AG04450 (cell line): ENCODE measurements at regions of chr17 and their contacts with region 1.

Region 1: DNA sequence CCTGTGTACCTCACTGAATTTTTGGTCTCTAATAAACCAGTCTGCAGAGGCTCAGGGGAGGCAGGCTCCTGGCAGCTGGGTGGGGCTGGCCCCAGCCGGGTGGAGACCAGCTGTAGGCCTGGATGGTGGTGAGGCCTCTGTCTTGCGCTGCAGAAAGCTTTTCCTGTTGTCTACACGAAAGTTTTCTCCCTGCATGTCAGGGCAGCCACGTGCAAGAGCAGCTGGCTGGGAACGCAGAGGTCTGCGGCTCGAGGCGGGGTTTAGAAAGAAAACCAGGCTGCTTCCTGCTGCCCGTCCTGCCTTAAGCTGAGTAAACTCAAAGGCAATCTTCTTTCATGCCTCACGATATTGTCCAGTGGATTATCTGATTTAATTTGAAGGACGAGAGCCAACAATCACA is 2.4 kb downstream of the SERPINF1 start:
- DNase-seq: peak; percentile 75
- H3K4me3 ChIP-seq: peak overlapping the region; percentile 75
- H3K27ac ChIP-seq: peak overlapping the region; percentile 86
- H3K27me3 ChIP-seq: no peaks in the 10 kb centered on the region
- CTCF ChIP-seq: no peak

Region 2: GRCh38 chr17:1783834-1784611 is 19.7 kb after region 1 on chr17:
- CTCF ChIA-PET with region 1: interaction called, 7 read pairs
- POLR2A ChIA-PET with region 1: interaction called, 10 read pairs
- DNase-seq: peak; percentile 78
- H3K4me3 ChIP-seq: no peak overlapping the region
- H3K27ac ChIP-seq: peak overlapping the region; percentile 62
- H3K27me3 ChIP-seq: no peaks in the 10 kb centered on the region
- CTCF ChIP-seq: peak; percentile 90

Region 3: DNA sequence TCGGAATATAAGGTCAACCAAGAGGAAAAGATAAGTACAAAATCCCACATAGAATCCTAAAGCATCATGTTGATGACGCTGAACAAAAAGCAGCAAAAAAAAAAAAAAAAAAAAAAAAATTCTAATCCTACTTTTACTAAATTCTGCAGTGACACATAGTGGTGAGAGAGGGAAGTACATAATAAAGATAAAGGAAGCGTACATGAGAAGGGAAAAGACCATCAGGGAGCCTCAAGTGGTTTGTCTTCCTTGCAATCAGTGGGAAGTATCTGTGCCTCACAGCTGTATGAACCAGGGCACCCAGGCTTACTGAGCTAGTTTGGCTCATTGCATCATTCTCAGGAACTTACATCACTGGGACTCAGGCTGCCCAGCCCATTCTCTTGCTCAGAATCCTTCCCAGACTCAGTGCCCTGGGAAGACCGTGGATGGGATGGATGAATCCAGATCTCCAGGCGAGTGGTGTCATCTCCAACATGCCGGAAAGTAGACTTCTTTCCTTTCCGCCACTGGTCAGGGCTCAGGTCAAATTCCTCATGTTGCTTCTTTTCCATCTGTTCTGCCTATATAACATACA is 518.1 kb after region 1 on chr17:
- CTCF ChIA-PET with region 1: no interaction called
- POLR2A ChIA-PET with region 1: no interaction called
- DNase-seq: peak; percentile 74
- H3K4me3 ChIP-seq: no peak overlapping the region
- H3K27ac ChIP-seq: peak overlapping the region; percentile 58
- H3K27me3 ChIP-seq: no peaks in the 10 kb centered on the region
- CTCF ChIP-seq: peak; percentile 64